IMR-90 (cell line): ENCODE measurements at regions of chr1 and their contacts with region 1.

Region 1: GRCh38 chr1:150010393-150011115 is at the start of gene OTUD7B:
- DNase-seq: peak; percentile 84
- ATAC-seq: peak; percentile 91
- H3K4me3 ChIP-seq: peak within 1 kb of the TSS; percentile 92
- H3K27ac ChIP-seq: peak within 1 kb of the TSS; percentile 97
- H3K4me1 ChIP-seq: peaks cover 7% of the 10 kb centered on the region; the same call in 1 of the 2 replicates
- H3K27me3 ChIP-seq: no peaks in the 10 kb centered on the region
- CTCF ChIP-seq: no peak
- POLR2A ChIP-seq: peak; percentile 41; the same call in 1 of the 2 replicates
- RAD21 ChIP-seq: no peak
- total RNA-seq, gene OTUD7B: 18.1 and 18.6 TPM in 2 replicates

Region 2: GRCh38 chr1:149906570-149907075 is 103.9 kb before region 1 on chr1:
- CTCF ChIA-PET with region 1: no interaction called
- POLR2A ChIA-PET with region 1: interaction called, 14 read pairs
- dilution Hi-C with region 1: no loop called
- in situ Hi-C with region 1: no loop called
- intact Hi-C with region 1: no loop called
- DNase-seq: no peak
- ATAC-seq: no peak
- H3K4me3 ChIP-seq: no peak overlapping the region
- H3K27ac ChIP-seq: no peak overlapping the region
- H3K4me1 ChIP-seq: no peaks in the 10 kb centered on the region
- H3K27me3 ChIP-seq: no peaks in the 10 kb centered on the region
- CTCF ChIP-seq: no peak
- POLR2A ChIP-seq: no peak
- RAD21 ChIP-seq: no peak

Region 3: GRCh38 chr1:149942207-149942606 is 68.3 kb before region 1 on chr1:
- CTCF ChIA-PET with region 1: no interaction called
- POLR2A ChIA-PET with region 1: no interaction called
- dilution Hi-C with region 1: no loop called
- in situ Hi-C with region 1: no loop called
- intact Hi-C with region 1: no loop called
- DNase-seq: peak; percentile 41
- ATAC-seq: peak; percentile 60
- H3K4me3 ChIP-seq: no peak overlapping the region
- H3K27ac ChIP-seq: no peak overlapping the region
- H3K4me1 ChIP-seq: peaks cover 8% of the 10 kb centered on the region
- H3K27me3 ChIP-seq: no peaks in the 10 kb centered on the region
- CTCF ChIP-seq: peak; percentile 35
- POLR2A ChIP-seq: no peak
- RAD21 ChIP-seq: peak; percentile 27; the same call in 1 of the 2 replicates

Region 4: GRCh38 chr1:150067184-150068036 is 56.9 kb after region 1 on chr1 and contains the start of gene VPS45:
- CTCF ChIA-PET with region 1: no interaction called
- POLR2A ChIA-PET with region 1: no interaction called
- dilution Hi-C with region 1: no loop called
- in situ Hi-C with region 1: no loop called
- intact Hi-C with region 1: loop called (anchors 1 kb)
- DNase-seq: peak; percentile 88
- ATAC-seq: peak; percentile 96
- H3K4me3 ChIP-seq: peak within 1 kb of the TSS; percentile 63
- H3K27ac ChIP-seq: peak within 1 kb of the TSS; percentile 89
- H3K4me1 ChIP-seq: peaks cover 2% of the 10 kb centered on the region; the same call in 1 of the 2 replicates
- H3K27me3 ChIP-seq: no peaks in the 10 kb centered on the region
- CTCF ChIP-seq: no peak
- POLR2A ChIP-seq: peak; percentile 62; the same call in 1 of the 2 replicates
- RAD21 ChIP-seq: no peak; the same call in 1 of the 2 replicates
- total RNA-seq, gene VPS45: 32.4 and 41.1 TPM in 2 replicates

Region 5: DNA sequence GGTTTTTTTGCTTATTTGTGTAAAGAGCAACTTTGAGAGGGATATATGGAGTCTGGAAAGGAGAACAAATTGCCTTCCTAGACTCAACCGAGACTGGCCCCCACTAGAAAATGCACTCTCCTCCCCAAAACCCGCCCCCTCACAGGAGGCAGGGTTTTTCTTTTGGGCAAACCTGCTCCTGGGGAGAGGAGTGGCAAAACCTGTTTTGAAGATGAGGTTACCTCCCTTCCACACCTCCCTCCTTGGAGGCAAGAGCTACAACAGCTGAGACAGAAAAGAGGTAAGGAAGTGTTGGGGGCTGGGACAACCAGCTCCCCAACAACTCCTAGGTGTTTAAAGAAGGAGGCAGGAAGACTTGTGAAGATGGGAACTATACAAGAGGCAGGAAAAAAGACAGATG is 1025.8 kb after region 1 on chr1 and contains the start of gene BNIPL:
- CTCF ChIA-PET with region 1: no interaction called
- POLR2A ChIA-PET with region 1: no interaction called
- dilution Hi-C with region 1: no loop called
- in situ Hi-C with region 1: no loop called
- intact Hi-C with region 1: no loop called
- DNase-seq: no peak
- ATAC-seq: no peak
- H3K4me3 ChIP-seq: no peak within 1 kb of the TSS
- H3K27ac ChIP-seq: no peak within 1 kb of the TSS
- H3K4me1 ChIP-seq: no peaks in the 10 kb centered on the region
- H3K27me3 ChIP-seq: no peaks in the 10 kb centered on the region
- CTCF ChIP-seq: no peak
- POLR2A ChIP-seq: no peak
- RAD21 ChIP-seq: no peak
- total RNA-seq, gene BNIPL: under 0.01 TPM in 1 of 2 replicates, not detected in the other